ENCODE measurements at regions of chr1 and their contacts with region 1.

Region 1: DNA sequence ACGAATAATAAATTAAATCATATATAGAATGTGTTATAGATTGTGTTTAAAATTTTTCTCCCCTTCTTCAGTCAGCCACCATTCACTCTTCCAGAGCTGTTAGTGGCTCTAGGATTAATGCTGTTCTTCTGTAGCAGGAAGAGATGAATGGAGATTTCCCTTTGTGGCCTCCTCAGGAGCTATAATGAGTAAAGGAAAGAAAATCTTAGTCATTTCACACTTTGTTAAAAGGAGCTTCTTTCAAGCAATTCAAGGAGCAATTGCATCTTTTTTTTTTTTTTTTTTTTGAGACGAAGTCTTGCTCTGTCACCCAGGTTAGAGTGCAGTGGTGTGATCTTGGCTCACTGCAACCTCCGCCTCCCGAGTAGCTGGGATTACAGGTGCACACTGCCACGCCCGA is 23.7 kb upstream of the TMCO2 start:
- DNase-seq: no peak
- ATAC-seq: no peak; the same call in 2 of the 3 replicates
- H3K4me3 ChIP-seq: no peak overlapping the region
- H3K27ac ChIP-seq: no peak overlapping the region
- H3K4me1 ChIP-seq: peaks cover 23% of the 10 kb centered on the region; the same call in 1 of the 2 replicates
- H3K27me3 ChIP-seq: no peaks in the 10 kb centered on the region
- CTCF ChIP-seq: no peak
- EP300 ChIP-seq: no peak
- POLR2A ChIP-seq: no peak
- RAD21 ChIP-seq: no peak

Region 2: DNA sequence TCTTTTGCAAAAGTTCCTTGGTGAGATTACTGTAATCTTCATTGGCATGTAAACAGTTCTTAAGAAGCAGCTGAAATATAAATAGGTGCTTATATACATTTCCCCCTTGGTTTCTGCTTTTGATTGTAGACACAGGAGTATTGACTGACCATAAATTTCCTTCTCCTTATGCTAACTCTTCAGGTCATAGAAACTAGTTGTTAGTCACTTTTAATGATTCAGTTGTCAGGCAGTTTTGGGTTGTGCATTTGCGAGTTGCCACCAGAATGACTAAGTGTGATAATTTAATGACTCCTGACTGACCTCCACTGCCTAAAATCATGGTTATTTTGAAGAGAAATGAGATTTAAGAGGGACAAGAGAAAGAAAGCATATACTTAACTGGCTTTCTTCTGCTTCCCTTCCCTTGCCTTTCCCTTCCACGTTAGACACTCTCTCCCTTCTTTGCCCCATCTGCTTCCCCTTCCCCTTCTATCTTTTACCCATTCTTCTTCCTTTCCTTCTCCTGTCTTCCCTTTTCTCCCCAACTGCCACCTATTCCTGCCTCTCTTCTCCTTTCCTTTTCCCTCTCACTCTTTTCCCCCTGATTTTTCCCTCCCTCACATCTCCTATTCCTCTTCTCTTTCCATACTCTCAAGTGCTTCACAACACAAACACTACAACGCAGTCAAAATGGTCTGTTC is 46.3 kb after region 1 on chr1:
- CTCF ChIA-PET with region 1: interaction called, 5 read pairs
- POLR2A ChIA-PET with region 1: interaction called, 12 read pairs
- RAD21 ChIA-PET with region 1: no interaction called
- SMC1A ChIA-PET with region 1: interaction called, 3 read pairs
- in situ Hi-C with region 1: no loop called
- intact Hi-C with region 1: no loop called
- DNase-seq: no peak
- ATAC-seq: peak; percentile 55
- H3K4me3 ChIP-seq: no peak overlapping the region
- H3K27ac ChIP-seq: no peak overlapping the region
- H3K4me1 ChIP-seq: peaks cover 5% of the 10 kb centered on the region; the same call in 1 of the 2 replicates
- H3K27me3 ChIP-seq: no peaks in the 10 kb centered on the region
- CTCF ChIP-seq: no peak
- EP300 ChIP-seq: no peak
- POLR2A ChIP-seq: no peak
- RAD21 ChIP-seq: no peak

Region 3: GRCh38 chr1:40281853-40282252 is 57.8 kb after region 1 on chr1:
- CTCF ChIA-PET with region 1: no interaction called
- POLR2A ChIA-PET with region 1: no interaction called
- RAD21 ChIA-PET with region 1: no interaction called
- SMC1A ChIA-PET with region 1: no interaction called
- in situ Hi-C with region 1: no loop called
- intact Hi-C with region 1: no loop called
- DNase-seq: no peak
- ATAC-seq: no peak
- H3K4me3 ChIP-seq: no peak overlapping the region
- H3K27ac ChIP-seq: no peak overlapping the region
- H3K4me1 ChIP-seq: no peaks in the 10 kb centered on the region
- H3K27me3 ChIP-seq: no peaks in the 10 kb centered on the region
- CTCF ChIP-seq: no peak
- EP300 ChIP-seq: no peak
- POLR2A ChIP-seq: no peak
- RAD21 ChIP-seq: no peak